Colonic mucosa (tissue), 4 donors: ENCODE measurements at regions of chr12 and their contacts with region 1.

Region 1: DNA sequence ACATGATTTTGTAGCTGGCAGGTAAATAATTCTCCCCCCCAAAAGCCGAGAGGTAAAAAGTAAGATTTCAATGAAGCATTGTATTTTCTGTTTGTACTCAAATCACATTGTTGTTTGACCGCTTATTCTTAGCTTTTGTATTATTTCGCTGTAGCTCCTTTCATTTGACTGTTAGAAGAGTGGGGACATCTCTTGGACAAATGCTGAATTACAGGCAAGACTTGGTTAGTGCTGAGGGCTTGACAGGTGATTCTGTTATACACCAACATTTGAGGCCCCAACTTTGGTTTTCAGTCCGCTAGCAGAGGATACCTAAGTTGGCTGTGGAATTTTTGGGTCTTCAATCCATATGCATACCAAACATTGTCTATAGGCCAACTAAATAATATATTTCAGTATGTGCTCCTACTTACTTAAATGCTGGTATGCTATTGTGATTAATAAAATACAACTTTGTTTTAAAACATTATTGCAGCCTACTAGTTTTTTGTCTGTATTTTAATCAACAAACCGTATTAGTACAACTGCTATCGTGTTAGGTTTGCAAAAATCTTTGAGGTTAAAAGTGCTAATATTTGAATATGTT is 102.2 kb downstream of the ERC1 start:
- DNase-seq: peak; percentile 42
- H3K4me3 ChIP-seq: no peak overlapping the region
- H3K27ac ChIP-seq: no peak overlapping the region
- H3K4me1 ChIP-seq: no peaks in the 10 kb centered on the region
- H3K27me3 ChIP-seq: no peaks in the 10 kb centered on the region
- CTCF ChIP-seq: peak; percentile 64

Region 2: GRCh38 chr12:823028-823698 is 270.1 kb before region 1 on chr12:
- intact Hi-C with region 1: loop called (anchors 10 kb)
- DNase-seq: no peak
- H3K4me3 ChIP-seq: no peak overlapping the region
- H3K27ac ChIP-seq: no peak overlapping the region
- H3K4me1 ChIP-seq: no peaks in the 10 kb centered on the region
- H3K27me3 ChIP-seq: no peaks in the 10 kb centered on the region
- CTCF ChIP-seq: no peak

Region 3: DNA sequence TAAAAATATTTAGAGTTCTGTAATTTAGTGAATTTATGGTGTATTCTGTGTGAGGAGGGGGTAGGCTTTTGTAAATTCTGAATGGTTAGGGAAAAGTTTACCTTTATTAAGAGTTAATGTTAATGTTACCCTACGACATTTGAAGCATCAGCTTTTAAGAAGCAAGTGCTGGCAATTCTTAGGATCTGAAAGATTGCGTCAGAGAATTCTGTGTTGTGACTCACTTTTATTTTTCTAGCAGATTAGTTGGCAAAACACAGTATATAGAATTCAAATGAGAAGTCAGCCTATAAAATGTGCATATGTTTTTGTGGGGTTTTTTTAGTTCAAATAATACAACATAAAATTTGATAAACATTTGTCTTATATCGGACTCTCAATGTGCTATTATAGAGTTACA is 241.3 kb before region 1 on chr12:
- intact Hi-C with region 1: no loop called
- DNase-seq: no peak
- H3K4me3 ChIP-seq: no peak overlapping the region
- H3K27ac ChIP-seq: no peak overlapping the region
- H3K4me1 ChIP-seq: no peaks in the 10 kb centered on the region
- H3K27me3 ChIP-seq: no peaks in the 10 kb centered on the region
- CTCF ChIP-seq: no peak

Region 4: GRCh38 chr12:949453-950191 is 143.6 kb before region 1 on chr12 and contains the start of gene RAD52:
- intact Hi-C with region 1: loop called (anchors 5 kb)
- DNase-seq: peak; percentile 98
- H3K4me3 ChIP-seq: peak within 1 kb of the TSS; percentile 84
- H3K27ac ChIP-seq: peak within 1 kb of the TSS; percentile 98
- H3K4me1 ChIP-seq: no peaks in the 10 kb centered on the region
- H3K27me3 ChIP-seq: no peaks in the 10 kb centered on the region
- CTCF ChIP-seq: peak; percentile 98
- total RNA-seq, gene RAD52: 19.4 to 28.8 TPM

Region 5: DNA sequence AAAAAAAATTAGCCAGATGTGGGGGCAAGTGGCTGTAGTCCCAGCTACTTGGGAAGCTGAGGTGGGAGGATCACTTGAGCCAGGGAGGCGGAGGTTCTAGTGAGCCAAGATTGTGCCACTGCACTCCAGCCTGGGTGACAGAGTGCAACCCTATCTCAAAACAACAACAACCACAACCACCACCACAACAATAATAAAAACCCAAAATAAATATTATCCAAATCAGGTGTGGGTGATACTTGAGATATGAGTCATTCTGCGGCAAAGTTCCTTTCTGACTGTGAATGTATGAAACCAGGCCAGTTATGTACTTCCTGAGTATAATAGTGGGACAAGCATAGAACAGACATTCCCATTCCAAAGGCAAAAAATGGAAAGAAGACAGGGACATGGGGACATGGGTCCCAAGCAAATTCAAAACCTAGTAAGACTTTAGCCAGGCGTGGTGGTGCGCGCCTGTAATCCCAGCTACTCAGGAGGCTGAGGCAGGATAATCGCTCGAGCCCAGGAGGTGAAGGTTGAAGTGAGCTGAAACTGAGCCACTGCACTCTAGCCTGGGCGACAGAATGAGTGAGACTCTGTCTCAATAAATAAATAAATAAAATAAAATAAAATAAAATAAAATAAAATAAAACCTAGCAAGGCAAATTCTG is 112.0 kb before region 1 on chr12:
- intact Hi-C with region 1: no loop called
- DNase-seq: no peak
- H3K4me3 ChIP-seq: no peak overlapping the region
- H3K27ac ChIP-seq: no peak overlapping the region
- H3K4me1 ChIP-seq: no peaks in the 10 kb centered on the region
- H3K27me3 ChIP-seq: no peaks in the 10 kb centered on the region
- CTCF ChIP-seq: no peak